ENCODE measurements at regions of chr18 and their contacts with region 1.

Region 1: GRCh38 chr18:34352385-34353163 is 127.9 kb upstream of the NOL4 start:
- DNase-seq: no peak
- ATAC-seq: no peak
- H3K4me3 ChIP-seq: no peak overlapping the region
- H3K27ac ChIP-seq: no peak overlapping the region
- H3K4me1 ChIP-seq: no peaks in the 10 kb centered on the region
- H3K27me3 ChIP-seq: no peaks in the 10 kb centered on the region
- CTCF ChIP-seq: peak in 10 of 12 donors; percentile 17 to 53 (median 38)
- POLR2A ChIP-seq: no peak

Region 2: GRCh38 chr18:34370704-34371405 is 18.3 kb after region 1 on chr18:
- intact Hi-C with region 1: loop called in 1 of 10 experiments (anchors 2 kb)
- DNase-seq: no peak
- ATAC-seq: no peak
- H3K4me3 ChIP-seq: no peak overlapping the region
- H3K27ac ChIP-seq: no peak overlapping the region
- H3K4me1 ChIP-seq: no peaks in the 10 kb centered on the region
- H3K27me3 ChIP-seq: no peaks in the 10 kb centered on the region
- CTCF ChIP-seq: no peak
- POLR2A ChIP-seq: no peak

Region 3: GRCh38 chr18:34458410-34458977 is 105.9 kb after region 1 on chr18:
- intact Hi-C with region 1: loop called in 1 of 10 experiments (anchors 10 kb)
- DNase-seq: peak in 1 of 5 donors; percentile 5
- ATAC-seq: peak in 3 of 4 donors; percentile 65 to 83 (median 81)
- H3K4me3 ChIP-seq: no peak overlapping the region
- H3K27ac ChIP-seq: peak overlapping the region in 4 of 12 donors; percentile 18 to 60 (median 40)
- H3K4me1 ChIP-seq: peaks cover 0 to 5% (median 0%) of the 10 kb centered on the region in 12 donors
- H3K27me3 ChIP-seq: no peaks in the 10 kb centered on the region
- CTCF ChIP-seq: no peak
- POLR2A ChIP-seq: no peak

Region 4: GRCh38 chr18:34483198-34483597 is 130.6 kb after region 1 on chr18:
- intact Hi-C with region 1: loop called in 1 of 10 experiments (anchors 10 kb)
- DNase-seq: no peak
- ATAC-seq: no peak
- H3K4me3 ChIP-seq: no peak overlapping the region
- H3K27ac ChIP-seq: no peak overlapping the region
- H3K4me1 ChIP-seq: no peaks in the 10 kb centered on the region
- H3K27me3 ChIP-seq: no peaks in the 10 kb centered on the region
- CTCF ChIP-seq: no peak
- POLR2A ChIP-seq: no peak

Region 5: DNA sequence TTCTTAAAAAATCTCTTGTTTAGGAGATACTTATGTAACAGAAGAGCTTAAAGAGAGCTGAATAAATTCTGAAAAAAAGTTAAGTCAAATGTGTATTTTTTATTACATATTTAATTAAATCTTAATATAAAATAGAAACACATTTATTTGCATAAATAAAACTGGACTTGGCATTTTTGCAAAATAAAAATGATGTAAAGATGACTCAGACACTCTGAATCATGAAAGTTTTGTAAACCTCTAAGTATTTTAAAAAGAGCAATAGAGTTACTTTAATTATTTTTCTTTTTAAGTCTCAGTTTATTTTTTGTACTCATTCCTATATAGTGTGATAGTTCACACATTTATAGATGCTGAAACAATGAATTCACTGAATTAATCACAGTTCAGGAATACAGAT is 247.5 kb after region 1 on chr18:
- intact Hi-C with region 1: loop called in 1 of 10 experiments (anchors 10 kb)
- DNase-seq: no peak
- ATAC-seq: no peak
- H3K4me3 ChIP-seq: no peak overlapping the region
- H3K27ac ChIP-seq: no peak overlapping the region
- H3K4me1 ChIP-seq: peaks cover 0 to 18% (median 0%) of the 10 kb centered on the region in 12 donors
- H3K27me3 ChIP-seq: no peaks in the 10 kb centered on the region
- CTCF ChIP-seq: no peak
- POLR2A ChIP-seq: no peak

Region 6: GRCh38 chr18:34647251-34647650 is 294.7 kb after region 1 on chr18:
- intact Hi-C with region 1: loop called in 2 of 10 experiments (anchors 5 to 10 kb)
- DNase-seq: no peak
- ATAC-seq: no peak
- H3K4me3 ChIP-seq: no peak overlapping the region
- H3K27ac ChIP-seq: no peak overlapping the region
- H3K4me1 ChIP-seq: peaks cover 0 to 31% (median 18%) of the 10 kb centered on the region in 12 donors
- H3K27me3 ChIP-seq: no peaks in the 10 kb centered on the region
- CTCF ChIP-seq: no peak
- POLR2A ChIP-seq: no peak

Measured in heart left ventricle (tissue), 16 donors.